Activated CD4-positive, alpha-beta memory T cell treated with anti-CD3 and anti-CD28 coated beads, Interleukin-2, amount 10 ng/mL, durations not matched to agents 7 days and 5 days (primary cell): ENCODE measurements at regions of chr1 and their contacts with region 1.

Region 1: GRCh38 chr1:109548321-109549267 is at the start of gene GNAI3:
- DNase-seq: peak; percentile 98
- H3K4me3 Mint-ChIP-seq: peak within 1 kb of the TSS; percentile 94
- H3K27ac Mint-ChIP-seq: peak within 1 kb of the TSS; percentile 99
- H3K4me1 Mint-ChIP-seq: peaks cover 46% of the 10 kb centered on the region
- H3K27me3 Mint-ChIP-seq: no peaks in the 10 kb centered on the region
- total RNA-seq, gene GNAI3: 9.4 to 9.6 TPM

Region 2: DNA sequence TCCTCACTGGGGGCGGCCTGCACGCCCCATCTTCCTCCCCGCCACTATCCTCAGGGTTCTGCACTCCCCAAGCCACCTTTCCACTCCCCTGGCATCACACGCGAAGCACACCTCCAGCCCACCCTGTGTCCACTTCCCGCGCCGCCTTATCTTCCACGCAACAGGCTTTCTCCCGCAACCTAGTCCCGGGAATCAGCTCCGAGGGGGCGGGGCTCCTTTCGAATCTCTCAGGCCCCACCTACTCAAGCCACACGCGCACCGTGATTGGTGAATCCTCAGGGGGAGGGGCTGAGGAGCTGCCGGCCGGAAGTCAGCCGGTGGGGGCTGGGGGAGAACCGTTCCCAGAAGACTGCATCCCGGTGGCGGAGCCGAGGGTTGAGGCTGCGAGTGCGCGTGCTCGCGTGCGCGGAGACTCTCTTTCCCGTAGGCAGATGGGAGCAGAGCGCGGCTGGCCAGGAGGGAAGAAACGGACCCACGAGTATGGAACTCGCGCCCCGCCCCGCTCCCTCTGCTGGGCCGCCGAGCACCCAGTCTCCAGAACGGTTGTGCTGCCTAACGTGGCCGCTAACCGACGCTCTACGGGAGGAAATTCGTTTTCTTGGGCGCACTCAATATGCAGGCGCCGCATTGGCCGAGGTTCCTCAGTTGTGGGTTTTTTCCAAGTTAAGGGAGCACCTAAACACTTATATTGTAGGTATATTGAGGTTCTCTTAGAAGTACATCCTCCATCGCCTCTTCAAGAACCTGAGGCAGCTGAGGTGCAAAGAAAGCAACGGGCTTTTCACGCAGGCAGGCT is 265.4 kb before region 1 on chr1 and contains the start of gene PSRC1:
- CTCF ChIA-PET with region 1: no interaction called
- POLR2A ChIA-PET with region 1: interaction called, 14 read pairs
- DNase-seq: peak; percentile 92
- H3K4me3 Mint-ChIP-seq: peak within 1 kb of the TSS; percentile 99
- H3K27ac Mint-ChIP-seq: peak within 1 kb of the TSS; percentile 85
- H3K4me1 Mint-ChIP-seq: peaks cover 33% of the 10 kb centered on the region
- H3K27me3 Mint-ChIP-seq: peaks cover 3% of the 10 kb centered on the region
- total RNA-seq, gene PSRC1: 27.0 to 28.7 TPM

Region 3: GRCh38 chr1:109493805-109494539 is 54.6 kb before region 1 on chr1 and contains the start of gene CYB561D1:
- CTCF ChIA-PET with region 1: interaction called, 779 read pairs
- POLR2A ChIA-PET with region 1: interaction called, 11 read pairs
- DNase-seq: peak; percentile 91
- H3K4me3 Mint-ChIP-seq: peak within 1 kb of the TSS; percentile 96
- H3K27ac Mint-ChIP-seq: peak within 1 kb of the TSS; percentile 82
- H3K4me1 Mint-ChIP-seq: peaks cover 42% of the 10 kb centered on the region
- H3K27me3 Mint-ChIP-seq: no peaks in the 10 kb centered on the region
- total RNA-seq, gene CYB561D1: 19.5 to 21.4 TPM

Region 4: DNA sequence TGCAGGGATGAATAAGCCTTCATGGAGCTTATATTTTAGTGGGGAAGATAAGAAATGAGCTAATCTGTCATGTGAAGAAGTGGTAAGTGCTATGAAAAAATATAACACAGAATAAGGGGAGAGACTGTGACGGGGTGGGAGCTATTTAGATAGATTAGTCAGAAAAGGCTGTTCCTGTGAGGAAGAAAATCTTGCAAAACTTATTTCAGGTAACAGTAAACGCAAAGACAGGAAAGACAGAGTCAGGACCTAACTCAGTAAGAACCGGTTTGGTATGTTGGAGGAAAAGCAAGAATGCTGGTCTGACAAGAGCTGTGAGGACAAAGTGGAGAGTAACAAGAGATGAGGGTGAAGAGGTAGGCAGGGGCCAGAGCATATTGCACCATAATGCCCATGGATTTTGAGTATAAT is 21.8 kb after region 1 on chr1:
- CTCF ChIA-PET with region 1: interaction called, 12 read pairs
- POLR2A ChIA-PET with region 1: interaction called, 11 read pairs
- DNase-seq: no peak
- H3K4me3 Mint-ChIP-seq: no peak overlapping the region
- H3K27ac Mint-ChIP-seq: no peak overlapping the region
- H3K4me1 Mint-ChIP-seq: peaks cover 16% of the 10 kb centered on the region
- H3K27me3 Mint-ChIP-seq: no peaks in the 10 kb centered on the region

Region 5: GRCh38 chr1:109630081-109630897 is 81.7 kb after region 1 on chr1:
- CTCF ChIA-PET with region 1: interaction called, 101 read pairs
- POLR2A ChIA-PET with region 1: interaction called, 106 read pairs
- DNase-seq: no peak
- H3K4me3 Mint-ChIP-seq: no peak overlapping the region
- H3K27ac Mint-ChIP-seq: no peak overlapping the region
- H3K4me1 Mint-ChIP-seq: peaks cover 17% of the 10 kb centered on the region
- H3K27me3 Mint-ChIP-seq: no peaks in the 10 kb centered on the region

Region 6: GRCh38 chr1:109649491-109649914 is 100.9 kb after region 1 on chr1:
- CTCF ChIA-PET with region 1: interaction called, 22 read pairs
- POLR2A ChIA-PET with region 1: interaction called, 6 read pairs
- DNase-seq: no peak
- H3K4me3 Mint-ChIP-seq: no peak overlapping the region
- H3K27ac Mint-ChIP-seq: no peak overlapping the region
- H3K4me1 Mint-ChIP-seq: peaks cover 9% of the 10 kb centered on the region
- H3K27me3 Mint-ChIP-seq: peaks cover 46% of the 10 kb centered on the region

Region 7: GRCh38 chr1:109910123-109910962 is 361.7 kb after region 1 on chr1 and contains the start of gene CSF1:
- CTCF ChIA-PET with region 1: no interaction called
- POLR2A ChIA-PET with region 1: interaction called, 13 read pairs
- DNase-seq: peak; percentile 64
- H3K4me3 Mint-ChIP-seq: peak within 1 kb of the TSS; percentile 94
- H3K27ac Mint-ChIP-seq: peak within 1 kb of the TSS; percentile 93
- H3K4me1 Mint-ChIP-seq: peaks cover 82% of the 10 kb centered on the region
- H3K27me3 Mint-ChIP-seq: no peaks in the 10 kb centered on the region
- total RNA-seq, gene CSF1: 89.4 to 94.2 TPM